CD8-positive, alpha-beta T cell (primary cell): ENCODE measurements at regions of chr9 and their contacts with region 1.

Region 1: DNA sequence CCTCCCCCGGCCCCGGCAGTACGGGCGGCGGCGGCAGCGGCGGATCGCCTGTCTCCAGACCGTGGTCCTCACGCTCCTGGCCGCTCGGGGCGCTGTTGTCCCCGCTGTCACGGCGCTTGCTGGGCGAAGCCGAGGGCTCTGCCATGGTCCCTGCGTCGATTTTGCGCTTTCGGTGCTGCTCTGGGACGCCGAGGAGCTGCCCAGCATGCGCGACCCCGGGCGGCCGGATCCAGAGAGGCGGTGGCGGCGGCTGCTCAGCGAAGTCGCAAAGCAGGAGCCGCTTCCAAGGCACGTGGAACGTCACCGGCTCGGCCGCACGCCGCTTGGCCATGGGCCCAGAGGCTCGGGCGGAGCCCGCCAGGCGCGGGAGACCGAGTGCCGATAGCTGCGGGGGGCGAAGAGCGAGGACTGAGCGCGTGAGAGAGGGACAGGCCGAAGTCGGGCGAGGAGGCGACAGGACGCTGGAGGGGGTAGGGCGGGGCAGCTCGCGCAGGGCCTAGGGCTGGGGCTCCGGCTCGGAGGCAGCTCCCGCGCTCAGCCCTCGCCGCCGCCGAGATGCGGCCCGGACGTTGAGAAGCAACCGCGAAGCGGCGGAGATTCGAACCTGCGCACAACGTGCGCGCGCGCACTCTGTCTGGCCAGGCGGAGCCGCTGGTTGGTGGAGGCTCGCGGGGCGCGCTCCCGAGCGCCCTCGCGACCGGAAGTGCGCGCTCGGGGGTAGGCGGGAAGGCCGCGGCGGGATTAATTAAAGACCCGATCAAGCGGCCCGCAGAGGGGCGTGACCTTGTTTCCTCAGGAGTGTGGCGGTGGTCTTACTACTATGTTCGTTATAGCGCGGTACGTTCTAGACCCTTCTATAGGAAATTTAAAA is at the start of gene C9orf40:
- DNase-seq: peak; percentile 81 to 93 (median 92)
- ATAC-seq: peak; percentile 88
- H3K4me3 ChIP-seq: peak within 1 kb of the TSS; percentile 86 to 99
- H3K4me3 Mint-ChIP-seq: peak within 1 kb of the TSS; percentile 98
- H3K27ac ChIP-seq: peak within 1 kb of the TSS; percentile 87 to 95
- H3K27ac Mint-ChIP-seq: peak within 1 kb of the TSS; percentile 94
- H3K4me1 ChIP-seq: no peaks in the 10 kb centered on the region
- H3K4me1 Mint-ChIP-seq: peaks cover 20% of the 10 kb centered on the region
- H3K27me3 ChIP-seq: no peaks in the 10 kb centered on the region
- H3K27me3 Mint-ChIP-seq: no peaks in the 10 kb centered on the region
- CTCF ChIP-seq: peak; percentile 77
- total RNA-seq, gene C9orf40: 1.5 to 2.3 TPM

Region 2: GRCh38 chr9:74760031-74760698 is 192.4 kb before region 1 on chr9:
- CTCF ChIA-PET with region 1: no interaction called
- POLR2A ChIA-PET with region 1: no interaction called
- intact Hi-C with region 1: no loop called
- DNase-seq: no peak
- ATAC-seq: no peak
- H3K4me3 ChIP-seq: no peak overlapping the region
- H3K4me3 Mint-ChIP-seq: no peak overlapping the region
- H3K27ac ChIP-seq: no peak overlapping the region
- H3K27ac Mint-ChIP-seq: no peak overlapping the region
- H3K4me1 ChIP-seq: no peaks in the 10 kb centered on the region
- H3K4me1 Mint-ChIP-seq: no peaks in the 10 kb centered on the region
- H3K27me3 ChIP-seq: no peaks in the 10 kb centered on the region
- H3K27me3 Mint-ChIP-seq: no peaks in the 10 kb centered on the region
- CTCF ChIP-seq: no peak

Region 3: DNA sequence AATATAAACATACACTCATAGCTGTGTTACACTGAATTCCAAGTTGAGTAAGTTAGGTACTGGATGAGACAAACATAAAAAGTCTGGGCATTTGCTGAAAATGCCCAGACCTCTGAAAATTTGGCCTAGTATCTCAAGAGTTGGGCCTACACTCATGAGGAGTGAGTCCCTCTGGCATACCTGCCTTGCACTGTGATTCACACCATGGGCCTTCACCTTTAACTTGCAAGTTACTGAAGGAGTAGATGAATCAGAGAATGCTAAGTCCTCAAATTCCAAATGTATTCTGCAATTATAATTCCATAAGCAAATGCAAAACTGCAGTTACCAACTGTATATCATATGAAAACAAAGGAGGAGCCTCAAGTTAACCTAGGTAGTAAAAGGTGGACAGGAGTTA is 32.5 kb after region 1 on chr9:
- CTCF ChIA-PET with region 1: interaction called, 4 read pairs
- POLR2A ChIA-PET with region 1: no interaction called
- intact Hi-C with region 1: loop called in 1 of 2 experiments (anchors 5 kb)
- DNase-seq: no peak
- ATAC-seq: no peak
- H3K4me3 ChIP-seq: no peak overlapping the region
- H3K4me3 Mint-ChIP-seq: no peak overlapping the region
- H3K27ac ChIP-seq: no peak overlapping the region
- H3K27ac Mint-ChIP-seq: no peak overlapping the region
- H3K4me1 ChIP-seq: no peaks in the 10 kb centered on the region
- H3K4me1 Mint-ChIP-seq: peaks cover 3% of the 10 kb centered on the region
- H3K27me3 ChIP-seq: no peaks in the 10 kb centered on the region
- H3K27me3 Mint-ChIP-seq: no peaks in the 10 kb centered on the region
- CTCF ChIP-seq: no peak

Region 4: GRCh38 chr9:75890472-75891276 is 938.2 kb after region 1 on chr9 and contains the start of gene PCSK5:
- CTCF ChIA-PET with region 1: no interaction called
- POLR2A ChIA-PET with region 1: no interaction called
- intact Hi-C with region 1: loop called in 1 of 2 experiments (anchors 5 kb)
- DNase-seq: peak; percentile 66 to 92 (median 85)
- ATAC-seq: peak; percentile 90
- H3K4me3 ChIP-seq: peak within 1 kb of the TSS; percentile 81 to 82
- H3K4me3 Mint-ChIP-seq: peak within 1 kb of the TSS; percentile 92
- H3K27ac ChIP-seq: peak within 1 kb of the TSS; percentile 60 to 70
- H3K27ac Mint-ChIP-seq: peak within 1 kb of the TSS; percentile 85
- H3K4me1 ChIP-seq: peaks cover 16% of the 10 kb centered on the region
- H3K4me1 Mint-ChIP-seq: peaks cover 54% of the 10 kb centered on the region
- H3K27me3 ChIP-seq: peaks cover 0 to 6% of the 10 kb centered on the region in 2 experiments
- H3K27me3 Mint-ChIP-seq: no peaks in the 10 kb centered on the region
- CTCF ChIP-seq: no peak
- total RNA-seq, gene PCSK5: 13.7 to 13.8 TPM